ENCODE measurements at regions of chr6 and their contacts with region 1.

Region 1: GRCh38 chr6:15491255-15491985 is 171.4 kb downstream of the DTNBP1 start:
- DNase-seq: peak; percentile 54
- H3K4me3 ChIP-seq: no peak overlapping the region
- H3K27ac ChIP-seq: no peak overlapping the region
- H3K4me1 ChIP-seq: no peaks in the 10 kb centered on the region
- H3K27me3 ChIP-seq: no peaks in the 10 kb centered on the region
- CTCF ChIP-seq: peak; percentile 84 to 90
- POLR2A ChIP-seq: no peak

Region 2: DNA sequence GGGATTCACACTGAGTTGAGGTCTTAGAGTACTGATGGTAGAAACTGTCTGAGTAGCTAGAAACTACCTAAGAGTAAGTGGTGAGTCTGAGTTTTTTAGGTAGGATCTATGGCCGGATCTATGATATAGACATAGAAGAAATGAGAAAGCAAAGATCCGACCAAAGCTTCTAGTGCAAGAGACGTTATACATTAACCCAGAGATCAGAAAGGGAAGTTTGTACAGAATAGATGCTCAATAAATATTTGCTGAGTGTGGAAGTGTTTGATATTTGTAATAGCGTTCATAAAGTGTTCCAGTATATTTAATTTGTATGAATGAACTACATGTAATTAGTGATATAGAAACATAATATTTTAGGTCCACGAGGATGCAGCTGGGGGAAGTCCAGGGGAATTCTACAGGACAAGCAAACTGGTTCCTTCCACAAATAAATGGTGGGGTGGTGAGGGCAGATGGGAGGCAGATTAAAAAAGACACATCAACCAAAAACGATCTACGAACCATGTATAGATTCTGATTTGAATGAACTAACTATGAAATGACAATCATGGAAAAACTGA is 277.5 kb before region 1 on chr6:
- CTCF ChIA-PET with region 1: no interaction called
- POLR2A ChIA-PET with region 1: no interaction called
- dilution Hi-C with region 1: no loop called
- intact Hi-C with region 1: no loop called
- DNase-seq: no peak
- H3K4me3 ChIP-seq: no peak overlapping the region
- H3K27ac ChIP-seq: no peak overlapping the region
- H3K4me1 ChIP-seq: no peaks in the 10 kb centered on the region
- H3K27me3 ChIP-seq: no peaks in the 10 kb centered on the region
- CTCF ChIP-seq: no peak
- POLR2A ChIP-seq: no peak

Region 3: GRCh38 chr6:15464211-15464725 is 27.2 kb before region 1 on chr6:
- CTCF ChIA-PET with region 1: interaction called, 11 read pairs
- POLR2A ChIA-PET with region 1: no interaction called
- dilution Hi-C with region 1: no loop called
- intact Hi-C with region 1: no loop called
- DNase-seq: peak; percentile 22
- H3K4me3 ChIP-seq: no peak overlapping the region
- H3K27ac ChIP-seq: no peak overlapping the region
- H3K4me1 ChIP-seq: no peaks in the 10 kb centered on the region
- H3K27me3 ChIP-seq: no peaks in the 10 kb centered on the region
- CTCF ChIP-seq: peak; percentile 61 to 73
- POLR2A ChIP-seq: no peak

Region 4: DNA sequence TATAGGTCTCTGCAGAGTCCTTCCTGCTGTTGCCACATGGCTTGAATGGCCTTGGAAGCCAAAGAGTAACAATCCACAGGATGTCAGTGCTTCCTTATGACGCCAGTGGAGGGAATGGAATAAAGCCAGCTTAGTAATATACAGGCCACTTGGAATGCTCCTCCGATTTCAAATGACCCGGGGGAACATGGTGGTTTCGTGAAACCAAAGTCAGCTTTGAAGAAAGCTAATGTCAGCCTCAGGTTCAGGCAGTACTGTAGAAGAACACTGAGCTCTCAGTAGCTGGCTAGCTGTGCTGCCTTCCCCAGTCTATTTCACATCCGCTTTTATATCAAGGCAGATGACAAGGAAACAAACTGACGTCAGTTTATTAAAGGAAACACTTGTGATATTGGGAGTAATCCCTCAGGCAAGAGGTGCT is 17.7 kb before region 1 on chr6:
- CTCF ChIA-PET with region 1: interaction called, 16 read pairs
- POLR2A ChIA-PET with region 1: no interaction called
- dilution Hi-C with region 1: no loop called
- intact Hi-C with region 1: no loop called
- DNase-seq: peak; percentile 62
- H3K4me3 ChIP-seq: no peak overlapping the region
- H3K27ac ChIP-seq: no peak overlapping the region
- H3K4me1 ChIP-seq: peaks cover 7% of the 10 kb centered on the region
- H3K27me3 ChIP-seq: no peaks in the 10 kb centered on the region
- CTCF ChIP-seq: no peak
- POLR2A ChIP-seq: no peak

Region 5: GRCh38 chr6:15504581-15505350 is 13.3 kb after region 1 on chr6:
- CTCF ChIA-PET with region 1: interaction called, 10 read pairs
- POLR2A ChIA-PET with region 1: no interaction called
- dilution Hi-C with region 1: no loop called
- intact Hi-C with region 1: no loop called
- DNase-seq: peak; percentile 91
- H3K4me3 ChIP-seq: peak overlapping the region in 1 of 3 experiments; percentile 1
- H3K27ac ChIP-seq: no peak overlapping the region
- H3K4me1 ChIP-seq: peaks cover 11% of the 10 kb centered on the region
- H3K27me3 ChIP-seq: no peaks in the 10 kb centered on the region
- CTCF ChIP-seq: no peak
- POLR2A ChIP-seq: no peak

Region 6: GRCh38 chr6:15588971-15589634 is 97.7 kb after region 1 on chr6:
- CTCF ChIA-PET with region 1: no interaction called
- POLR2A ChIA-PET with region 1: no interaction called
- dilution Hi-C with region 1: no loop called
- intact Hi-C with region 1: no loop called
- DNase-seq: no peak
- H3K4me3 ChIP-seq: no peak overlapping the region
- H3K27ac ChIP-seq: no peak overlapping the region
- H3K4me1 ChIP-seq: no peaks in the 10 kb centered on the region
- H3K27me3 ChIP-seq: no peaks in the 10 kb centered on the region
- CTCF ChIP-seq: no peak
- POLR2A ChIP-seq: no peak

Measured in endothelial cell of umbilical vein (primary cell).